Activated CD4-positive, alpha-beta memory T cell treated with anti-CD3 and anti-CD28 coated beads for 36 hours (primary cell): ENCODE measurements at regions of chr4 and their contacts with region 1.

Region 1: GRCh38 chr4:6986781-6987587 is 56.2 kb upstream of the TADA2B start:
- DNase-seq: peak; percentile 96
- H3K4me3 Mint-ChIP-seq: peak overlapping the region; percentile 97
- H3K27ac Mint-ChIP-seq: peak overlapping the region; percentile 92
- H3K4me1 Mint-ChIP-seq: peaks cover 76% of the 10 kb centered on the region
- H3K27me3 Mint-ChIP-seq: no peaks in the 10 kb centered on the region

Region 2: DNA sequence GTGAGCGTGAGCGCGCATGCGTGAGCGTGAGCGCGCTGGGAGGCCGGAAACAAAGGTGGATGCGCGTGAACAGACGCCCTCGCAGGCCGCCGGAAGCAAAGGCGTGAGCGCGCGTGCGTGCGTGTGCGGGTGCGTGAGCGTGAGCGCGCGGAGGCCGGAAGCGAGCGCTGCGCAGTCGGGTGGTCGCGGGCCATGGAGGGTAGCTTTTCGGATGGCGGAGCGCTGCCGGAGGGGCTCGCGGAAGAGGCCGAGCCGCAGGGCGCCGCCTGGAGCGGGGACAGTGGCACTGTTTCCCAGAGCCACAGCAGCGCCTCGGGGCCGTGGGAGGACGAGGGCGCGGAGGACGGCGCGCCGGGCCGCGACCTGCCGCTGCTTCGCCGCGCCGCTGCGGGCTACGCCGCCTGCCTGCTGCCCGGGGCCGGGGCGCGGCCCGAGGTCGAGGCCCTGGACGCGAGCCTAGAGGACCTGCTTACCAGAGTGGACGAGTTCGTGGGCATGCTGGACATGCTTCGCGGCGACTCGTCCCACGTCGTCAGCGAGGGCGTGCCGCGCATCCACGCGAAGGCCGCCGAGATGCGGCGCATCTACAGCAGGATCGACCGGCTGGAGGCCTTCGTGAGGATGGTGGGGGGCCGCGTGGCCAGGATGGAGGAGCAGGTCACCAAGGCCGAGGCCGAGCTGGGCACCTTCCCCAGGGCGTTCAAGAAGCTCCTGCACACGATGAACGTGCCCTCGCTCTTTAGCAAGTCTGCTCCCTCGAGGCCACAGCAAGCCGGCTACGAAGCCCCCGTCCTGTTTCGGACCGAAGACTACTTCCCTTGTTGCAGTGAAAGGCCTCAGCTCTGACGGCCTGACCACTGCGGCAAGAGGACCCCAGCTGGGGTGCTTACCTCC is 270.7 kb before region 1 on chr4 and contains the start of gene BLOC1S4:
- CTCF ChIA-PET with region 1: no interaction called
- POLR2A ChIA-PET with region 1: no interaction called
- intact Hi-C with region 1: loop called (anchors 5 kb)
- DNase-seq: peak; percentile 92
- H3K4me3 Mint-ChIP-seq: peak within 1 kb of the TSS; percentile 90
- H3K27ac Mint-ChIP-seq: peak within 1 kb of the TSS; percentile 97
- H3K4me1 Mint-ChIP-seq: peaks cover 27% of the 10 kb centered on the region
- H3K27me3 Mint-ChIP-seq: peaks cover 3% of the 10 kb centered on the region
- total RNA-seq, gene BLOC1S4: 17.0 to 19.7 TPM

Region 3: DNA sequence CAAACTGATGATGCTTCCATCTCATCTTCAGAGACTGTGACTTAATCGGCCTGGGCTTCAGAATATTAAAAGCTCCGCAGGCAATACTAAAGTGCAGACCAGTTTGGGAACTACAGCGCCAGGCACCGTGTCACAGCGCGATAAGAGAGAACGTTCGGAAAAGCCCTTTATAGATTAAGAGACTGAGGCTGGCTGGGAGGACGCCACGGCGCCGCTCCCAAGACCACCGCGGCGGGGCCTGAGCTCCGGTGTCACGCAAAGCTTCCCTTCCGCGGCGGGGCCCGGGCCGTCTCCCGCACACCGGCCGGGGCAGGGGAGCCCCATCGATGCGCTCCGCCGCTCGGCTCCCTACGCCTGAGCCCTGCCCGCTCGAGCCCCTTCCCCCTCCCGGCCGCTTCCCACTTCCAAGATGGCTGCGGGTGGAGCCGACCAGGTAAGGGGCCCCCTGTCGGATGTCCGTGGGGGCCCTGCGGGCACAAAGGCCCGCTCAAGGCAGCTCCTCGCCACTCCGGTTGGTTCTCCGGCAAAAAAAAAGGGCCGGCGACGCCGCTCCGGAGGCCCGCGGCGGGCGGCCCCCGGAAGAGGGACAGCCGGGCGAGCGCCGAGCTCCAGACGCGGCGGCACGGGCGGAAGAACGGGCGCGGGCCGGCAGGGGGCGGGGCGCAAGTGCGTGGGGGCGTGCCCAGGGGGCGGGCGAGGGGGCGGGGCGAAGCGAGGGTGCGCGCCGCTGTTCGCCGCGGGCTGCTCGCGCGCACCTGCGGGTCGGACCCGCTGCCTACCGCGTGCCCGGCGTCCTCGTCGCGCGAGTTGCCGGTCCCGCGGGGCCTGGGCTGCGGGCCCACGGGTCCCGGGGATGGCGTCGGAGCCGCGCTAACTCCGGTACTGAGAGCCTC is 77.7 kb before region 1 on chr4 and contains the start of gene TBC1D14:
- CTCF ChIA-PET with region 1: interaction called, 8 read pairs
- POLR2A ChIA-PET with region 1: interaction called, 9 read pairs
- intact Hi-C with region 1: loop called (anchors 1 kb)
- DNase-seq: peak; percentile 89
- H3K4me3 Mint-ChIP-seq: peak within 1 kb of the TSS; percentile 94
- H3K27ac Mint-ChIP-seq: peak within 1 kb of the TSS; percentile 89
- H3K4me1 Mint-ChIP-seq: peaks cover 54% of the 10 kb centered on the region
- H3K27me3 Mint-ChIP-seq: no peaks in the 10 kb centered on the region
- total RNA-seq, gene TBC1D14: 37.1 to 37.3 TPM

Region 4: DNA sequence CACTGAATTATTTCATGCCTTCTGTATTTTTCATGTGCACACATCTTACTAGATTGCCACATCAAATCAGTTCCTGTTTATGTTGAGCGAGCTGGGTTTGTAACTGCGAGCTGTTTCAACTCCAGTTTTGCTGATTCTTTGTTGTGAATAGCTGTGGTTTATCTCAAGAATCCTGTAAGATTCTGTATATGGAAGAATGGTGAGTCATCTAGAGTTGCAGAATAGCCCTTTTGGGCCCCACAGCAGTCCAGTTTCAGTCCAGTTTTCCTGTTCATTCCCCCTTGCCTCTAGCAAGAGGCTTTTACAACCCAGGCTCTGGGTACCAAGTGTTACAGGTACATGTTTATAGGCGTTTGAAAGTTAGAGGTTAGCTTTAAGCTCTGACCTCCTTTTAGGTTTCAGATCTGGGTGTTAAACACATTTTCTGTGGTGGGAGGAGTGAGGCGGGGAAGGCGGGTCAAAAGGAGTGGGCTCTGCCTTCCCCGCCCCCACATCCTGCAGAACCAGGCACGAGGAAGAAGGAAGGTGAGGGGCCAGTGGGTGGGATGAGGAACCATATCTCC is 44.7 kb before region 1 on chr4:
- CTCF ChIA-PET with region 1: interaction called, 3 read pairs
- POLR2A ChIA-PET with region 1: no interaction called
- intact Hi-C with region 1: loop called (anchors 2 kb)
- DNase-seq: peak; percentile 67
- H3K4me3 Mint-ChIP-seq: peak overlapping the region; percentile 5
- H3K27ac Mint-ChIP-seq: peak overlapping the region; percentile 53
- H3K4me1 Mint-ChIP-seq: peaks cover 72% of the 10 kb centered on the region
- H3K27me3 Mint-ChIP-seq: no peaks in the 10 kb centered on the region

Region 5: DNA sequence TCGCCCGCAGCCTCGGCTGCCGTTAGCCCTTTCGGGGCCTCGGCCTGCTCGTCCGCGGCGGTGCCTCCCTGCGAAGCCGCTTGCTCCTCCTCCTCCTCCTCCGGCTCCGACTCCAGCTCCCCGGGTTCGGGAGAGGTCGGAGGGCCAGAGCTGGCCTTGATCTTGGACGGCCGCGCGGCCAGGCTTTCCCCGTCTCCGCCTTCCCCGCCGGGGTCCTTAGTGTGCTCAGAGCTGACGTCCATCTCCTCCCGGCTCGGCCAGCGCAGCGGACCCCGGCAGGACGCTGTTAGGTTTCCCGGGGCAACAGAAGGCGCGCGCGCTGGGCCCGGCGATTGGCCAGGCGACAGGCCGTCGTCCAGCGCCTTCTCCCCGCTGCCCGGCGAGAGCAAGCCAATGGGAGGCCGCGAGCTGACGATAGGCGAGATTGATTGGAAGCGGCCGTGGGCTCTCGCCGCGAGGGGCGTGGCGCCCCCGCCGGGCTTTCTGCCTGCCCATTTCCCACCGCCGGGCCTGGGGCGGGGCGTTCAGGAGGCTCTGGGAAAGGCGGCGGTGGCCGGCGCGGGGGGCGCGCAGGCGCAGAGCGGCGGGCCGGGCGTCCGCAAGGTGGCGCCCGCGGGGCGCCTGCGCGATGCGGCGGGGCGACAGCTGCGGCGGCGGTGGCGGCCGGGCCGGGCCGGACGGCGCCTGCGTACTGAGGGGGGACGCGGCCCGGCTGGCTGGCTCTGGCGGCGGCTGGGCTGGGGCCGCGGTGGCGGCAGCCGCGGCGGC is 55.9 kb after region 1 on chr4 and contains the start of gene TADA2B:
- CTCF ChIA-PET with region 1: interaction called, 14 read pairs
- POLR2A ChIA-PET with region 1: interaction called, 7 read pairs
- intact Hi-C with region 1: loop called (anchors 1 kb)
- DNase-seq: peak; percentile 96
- H3K4me3 Mint-ChIP-seq: peak within 1 kb of the TSS; percentile 89
- H3K27ac Mint-ChIP-seq: peak within 1 kb of the TSS; percentile 67
- H3K4me1 Mint-ChIP-seq: peaks cover 45% of the 10 kb centered on the region
- H3K27me3 Mint-ChIP-seq: no peaks in the 10 kb centered on the region
- total RNA-seq, gene TADA2B: 10.8 to 11.5 TPM

Region 6: GRCh38 chr4:7120341-7120740 is 133.4 kb after region 1 on chr4:
- CTCF ChIA-PET with region 1: no interaction called
- POLR2A ChIA-PET with region 1: no interaction called
- intact Hi-C with region 1: no loop called
- DNase-seq: no peak
- H3K4me3 Mint-ChIP-seq: no peak overlapping the region
- H3K27ac Mint-ChIP-seq: no peak overlapping the region
- H3K4me1 Mint-ChIP-seq: no peaks in the 10 kb centered on the region
- H3K27me3 Mint-ChIP-seq: peaks cover 17% of the 10 kb centered on the region